ENCODE measurements at regions of chr1 and their contacts with region 1.

Region 1: DNA sequence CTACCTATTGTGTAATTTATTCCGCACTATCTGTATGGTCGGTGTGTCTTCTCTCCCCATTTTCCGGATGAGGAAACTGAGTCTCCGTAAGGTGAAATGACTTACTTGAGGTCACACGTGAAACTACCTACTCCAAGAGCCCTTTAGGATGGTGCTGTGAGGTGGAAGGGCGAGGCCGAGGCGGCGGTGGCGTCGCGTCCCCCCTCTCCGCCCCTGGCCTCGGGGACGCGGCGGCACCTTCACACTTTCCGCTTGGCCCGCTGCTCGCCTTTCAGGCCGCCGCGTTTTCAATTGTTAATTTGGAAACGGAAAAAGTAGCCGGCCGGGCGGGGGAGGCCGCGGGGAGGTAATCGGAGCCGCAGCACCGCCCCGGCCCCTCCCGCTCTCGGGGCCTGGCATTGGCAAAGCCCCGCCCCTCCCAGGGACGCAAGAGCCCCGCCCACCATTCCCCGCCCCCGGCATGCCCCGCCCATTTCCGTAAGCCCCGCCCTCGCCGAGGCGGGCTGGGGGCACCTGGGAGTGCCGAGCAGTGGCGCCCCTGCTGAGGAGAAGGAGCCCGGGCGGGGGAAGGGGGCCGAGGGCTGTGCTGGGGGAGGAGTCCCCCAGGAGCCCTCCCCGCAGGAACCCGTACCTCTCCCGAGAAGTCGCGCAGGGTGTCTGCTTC is 18.6 kb downstream of the KCNQ4 start:
- H3K4me3 Mint-ChIP-seq: peak overlapping the region; percentile 68
- H3K27ac Mint-ChIP-seq: peak overlapping the region; percentile 56
- H3K4me1 Mint-ChIP-seq: peaks cover 45% of the 10 kb centered on the region
- H3K27me3 Mint-ChIP-seq: peaks cover 39% of the 10 kb centered on the region

Region 2: GRCh38 chr1:40862008-40862863 is 60.0 kb after region 1 on chr1 and contains the start of gene CITED4:
- intact Hi-C with region 1: loop called (anchors 5 kb)
- H3K4me3 Mint-ChIP-seq: peak within 1 kb of the TSS; percentile 83
- H3K27ac Mint-ChIP-seq: peak within 1 kb of the TSS; percentile 79
- H3K4me1 Mint-ChIP-seq: peaks cover 26% of the 10 kb centered on the region
- H3K27me3 Mint-ChIP-seq: peaks cover 21% of the 10 kb centered on the region